H1 (cell line): ENCODE measurements at regions of chr10 and their contacts with region 1.

Region 1: DNA sequence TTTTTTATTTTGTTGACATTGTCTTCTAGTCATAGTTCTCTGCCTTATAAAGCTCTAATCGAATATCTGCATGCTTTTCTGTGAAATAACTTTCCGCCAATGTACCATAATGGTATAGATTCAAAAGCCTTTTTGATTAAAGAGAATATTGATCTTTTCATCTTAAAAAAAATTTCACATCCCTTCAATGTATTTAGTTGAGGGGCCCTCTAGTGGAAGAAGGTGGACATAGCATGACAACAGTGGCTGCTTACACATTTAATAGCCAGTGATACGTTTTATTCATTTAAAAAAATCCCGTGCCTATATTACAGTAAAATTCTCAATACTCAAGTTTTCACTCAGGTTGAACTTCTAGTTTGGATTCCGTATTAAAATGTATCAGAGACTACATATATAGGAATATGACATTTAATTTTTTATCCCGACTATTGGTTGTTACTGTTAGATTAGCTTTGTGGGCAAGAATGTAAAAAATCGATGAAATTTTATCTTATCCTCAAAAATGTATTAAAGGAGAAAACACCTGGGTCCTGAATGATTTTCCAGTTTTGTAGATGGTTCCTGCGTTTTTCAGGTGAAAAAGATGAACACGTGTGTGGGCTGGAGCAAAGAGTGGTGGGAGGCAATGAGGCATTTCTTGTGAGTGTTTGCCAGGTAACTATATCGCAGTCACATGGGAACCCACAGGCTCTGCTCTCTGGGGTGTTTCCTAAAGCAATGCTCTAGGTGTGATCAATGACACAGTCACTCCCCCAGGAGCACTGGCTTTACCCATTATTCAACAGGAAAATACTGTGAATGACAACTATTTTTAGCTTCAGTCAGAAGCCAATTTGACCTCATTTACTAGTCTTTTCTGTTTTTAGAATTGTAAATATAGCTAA is 24.1 kb upstream of the PNLIP start:
- DNase-seq: no peak
- H3K4me3 ChIP-seq: no peak overlapping the region
- H3K27ac ChIP-seq: no peak overlapping the region
- H3K4me1 ChIP-seq: no peaks in the 10 kb centered on the region; a peak in 1 of 7 replicates
- H3K27me3 ChIP-seq: no peaks in the 10 kb centered on the region
- CTCF ChIP-seq: peak in 2 of 3 experiments; percentile 46 to 48; a peak in 3 of 4 replicates
- EP300 ChIP-seq: no peak
- POLR2A ChIP-seq: no peak
- RAD21 ChIP-seq: peak; percentile 45 to 55

Region 2: DNA sequence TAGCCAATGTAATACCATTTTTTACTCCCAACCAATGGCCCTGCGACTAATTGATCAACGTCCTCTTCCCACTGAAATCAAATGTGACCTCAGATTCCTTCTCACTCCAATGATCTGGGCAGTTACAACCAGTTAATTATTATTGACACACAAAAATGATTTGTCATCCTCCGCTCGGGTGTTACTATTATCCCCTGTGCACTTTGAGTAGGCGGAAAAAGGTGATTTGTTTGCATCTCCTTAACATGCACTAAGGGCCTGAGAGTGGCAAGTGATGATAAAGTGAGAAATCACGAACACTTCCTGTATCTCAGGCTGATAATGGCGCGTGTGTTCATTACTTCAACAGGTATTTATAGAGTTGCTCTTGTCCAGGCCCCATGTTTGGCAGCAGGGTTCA is 16.9 kb before region 1 on chr10:
- CTCF ChIA-PET with region 1: interaction called, 11 read pairs
- POLR2A ChIA-PET with region 1: interaction called, 3 read pairs
- DNase-seq: no peak
- H3K4me3 ChIP-seq: no peak overlapping the region
- H3K27ac ChIP-seq: no peak overlapping the region
- H3K4me1 ChIP-seq: no peaks in the 10 kb centered on the region
- H3K27me3 ChIP-seq: no peaks in the 10 kb centered on the region
- CTCF ChIP-seq: no peak
- EP300 ChIP-seq: no peak
- POLR2A ChIP-seq: no peak
- RAD21 ChIP-seq: no peak

Region 3: DNA sequence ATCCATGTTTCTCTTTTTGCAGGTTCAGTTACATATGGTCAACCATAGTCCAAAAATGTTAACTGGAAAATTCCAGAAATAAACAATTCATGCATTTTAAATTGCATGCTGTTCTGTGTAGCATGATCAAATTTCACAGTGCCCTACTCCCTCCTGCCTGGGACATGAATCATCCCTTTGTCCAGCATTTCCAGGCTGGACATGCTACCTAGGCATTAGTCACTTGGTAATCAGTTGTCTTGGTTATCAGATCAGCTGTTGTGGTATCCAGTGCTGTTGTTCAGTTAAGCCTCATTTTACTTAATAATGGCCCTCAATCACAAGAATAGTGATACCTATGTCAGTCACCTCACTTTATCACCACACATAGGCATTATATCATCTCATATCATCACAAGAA is 16.8 kb after region 1 on chr10:
- CTCF ChIA-PET with region 1: interaction called, 14 read pairs
- POLR2A ChIA-PET with region 1: no interaction called
- DNase-seq: no peak
- H3K4me3 ChIP-seq: no peak overlapping the region
- H3K27ac ChIP-seq: no peak overlapping the region
- H3K4me1 ChIP-seq: no peaks in the 10 kb centered on the region; a peak in 2 of 7 replicates
- H3K27me3 ChIP-seq: no peaks in the 10 kb centered on the region
- CTCF ChIP-seq: no peak
- EP300 ChIP-seq: no peak
- POLR2A ChIP-seq: no peak
- RAD21 ChIP-seq: no peak